Activated B cell treated with CpG ODN at 0.5 μM for 24 hours (primary cell): ENCODE measurements at regions of chr5 and their contacts with region 1.

Region 1: DNA sequence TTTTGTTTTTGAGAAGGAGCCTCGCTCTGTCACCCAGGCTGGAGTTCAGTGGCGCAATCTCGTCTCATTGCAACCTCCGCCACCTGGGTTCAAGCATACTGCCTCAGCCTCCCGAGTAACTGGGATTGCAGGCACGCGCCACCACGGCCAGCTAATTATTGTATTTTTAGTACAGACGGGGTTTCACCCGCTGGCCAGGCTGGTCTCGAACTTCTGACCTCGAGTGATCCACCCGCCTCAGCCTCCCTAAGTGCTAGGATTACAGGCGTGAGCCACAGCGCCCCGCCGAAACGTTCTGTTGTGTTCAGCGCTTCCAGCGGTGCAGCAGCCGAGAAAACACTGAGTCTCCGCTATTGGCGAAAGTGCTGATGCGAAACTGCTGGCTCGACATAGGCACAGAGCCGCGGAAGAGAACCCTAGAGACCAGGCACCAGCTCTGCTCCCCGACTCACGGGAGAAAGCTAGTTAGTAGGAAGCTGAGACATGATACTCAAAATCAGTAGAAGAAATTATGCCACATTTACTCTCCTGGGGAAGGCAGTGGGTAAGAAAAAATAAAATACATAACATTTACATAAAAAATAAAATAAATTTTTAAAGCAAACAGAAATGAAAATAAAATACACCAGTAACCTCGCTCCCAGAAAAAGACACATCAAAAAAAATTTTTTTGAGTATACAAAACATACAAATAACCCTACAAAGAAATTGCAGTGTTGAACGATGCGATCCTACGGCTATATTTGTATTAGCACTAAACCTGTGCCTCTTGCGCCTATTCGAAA is 31.6 kb downstream of the ANXA2R start:
- DNase-seq: peak; percentile 77
- ATAC-seq: peak; percentile 53
- H3K4me3 Mint-ChIP-seq: peak overlapping the region; percentile 89
- H3K27ac Mint-ChIP-seq: peak overlapping the region; percentile 98
- H3K4me1 Mint-ChIP-seq: peaks cover 31% of the 10 kb centered on the region
- H3K27me3 Mint-ChIP-seq: no peaks in the 10 kb centered on the region
- CTCF ChIP-seq: no peak

Region 2: DNA sequence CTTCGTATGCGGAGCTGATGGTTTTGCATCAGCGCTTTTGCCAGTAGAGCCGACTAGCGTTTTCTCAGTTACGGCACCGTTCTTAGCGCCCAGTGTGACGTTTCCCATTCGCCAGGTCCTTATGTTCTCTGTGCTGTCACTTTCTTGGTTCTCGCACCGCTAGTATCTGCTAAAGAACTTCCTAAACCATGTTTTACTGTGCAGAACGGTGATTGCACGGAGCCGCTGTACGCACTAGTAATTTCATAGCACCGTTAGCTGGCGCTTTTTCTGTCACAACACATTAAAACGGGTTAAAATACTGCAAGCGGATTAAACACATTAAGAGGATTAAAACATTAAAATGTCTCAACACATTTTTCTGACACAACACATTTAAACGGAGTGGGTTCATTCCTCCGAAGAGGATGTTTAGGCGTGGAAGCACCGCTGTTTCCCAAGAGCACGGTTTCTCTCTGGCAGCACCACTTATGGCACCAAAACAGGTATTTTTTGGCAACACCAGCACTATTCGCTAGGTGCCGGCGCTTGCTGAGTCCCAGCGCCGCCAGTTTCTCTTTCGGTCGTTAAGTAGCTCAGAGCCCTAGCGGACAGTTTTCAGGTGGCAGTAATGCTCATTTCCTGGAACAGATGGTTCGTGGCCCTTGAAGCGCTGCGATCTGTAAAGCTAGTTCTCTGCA is 11.2 kb after region 1 on chr5:
- CTCF ChIA-PET with region 1: interaction called, 58 read pairs
- POLR2A ChIA-PET with region 1: interaction called, 384 read pairs
- intact Hi-C with region 1: loop called (anchors 1 kb)
- DNase-seq: peak; percentile 61
- ATAC-seq: peak; percentile 64
- H3K4me3 Mint-ChIP-seq: peak overlapping the region; percentile 97
- H3K27ac Mint-ChIP-seq: peak overlapping the region; percentile 100
- H3K4me1 Mint-ChIP-seq: peaks cover 39% of the 10 kb centered on the region
- H3K27me3 Mint-ChIP-seq: no peaks in the 10 kb centered on the region
- CTCF ChIP-seq: no peak